OCI-LY7 (cell line): ENCODE measurements at regions of chr19 and their contacts with region 1.

Region 1: GRCh38 chr19:10968527-10969135 is 7.8 kb downstream of the SMARCA4 start:
- DNase-seq: peak; percentile 98
- H3K4me3 ChIP-seq: peak overlapping the region; percentile 56
- H3K27ac ChIP-seq: peak overlapping the region; percentile 99
- H3K4me1 ChIP-seq: peaks cover 97% of the 10 kb centered on the region
- CTCF ChIP-seq: no peak

Region 2: GRCh38 chr19:10416380-10417257 is 552.0 kb before region 1 on chr19:
- CTCF ChIA-PET with region 1: no interaction called
- POLR2A ChIA-PET with region 1: no interaction called
- intact Hi-C with region 1: loop called (anchors 5 kb)
- DNase-seq: peak; percentile 97
- H3K4me3 ChIP-seq: peak overlapping the region; percentile 76
- H3K27ac ChIP-seq: peak overlapping the region; percentile 100
- H3K4me1 ChIP-seq: peaks cover 62% of the 10 kb centered on the region
- CTCF ChIP-seq: peak; percentile 94

Region 3: GRCh38 chr19:10502524-10503001 is 466.1 kb before region 1 on chr19:
- CTCF ChIA-PET with region 1: no interaction called
- POLR2A ChIA-PET with region 1: no interaction called
- intact Hi-C with region 1: no loop called
- DNase-seq: peak; percentile 96
- H3K4me3 ChIP-seq: peak overlapping the region; percentile 86
- H3K27ac ChIP-seq: peak overlapping the region; percentile 75
- H3K4me1 ChIP-seq: peaks cover 17% of the 10 kb centered on the region
- CTCF ChIP-seq: 0 out of 2 replicates have a peak, but pooled peaks have one; percentile 5

Region 4: GRCh38 chr19:10593820-10594637 is 374.6 kb before region 1 on chr19:
- CTCF ChIA-PET with region 1: no interaction called
- POLR2A ChIA-PET with region 1: no interaction called
- intact Hi-C with region 1: loop called (anchors 5 kb)
- DNase-seq: peak; percentile 95
- H3K4me3 ChIP-seq: peak overlapping the region; percentile 20
- H3K27ac ChIP-seq: peak overlapping the region; percentile 89
- H3K4me1 ChIP-seq: peaks cover 71% of the 10 kb centered on the region
- CTCF ChIP-seq: no peak